Heart right ventricle (tissue), 16 donors: ENCODE measurements at regions of chr1 and their contacts with region 1.

Region 1: DNA sequence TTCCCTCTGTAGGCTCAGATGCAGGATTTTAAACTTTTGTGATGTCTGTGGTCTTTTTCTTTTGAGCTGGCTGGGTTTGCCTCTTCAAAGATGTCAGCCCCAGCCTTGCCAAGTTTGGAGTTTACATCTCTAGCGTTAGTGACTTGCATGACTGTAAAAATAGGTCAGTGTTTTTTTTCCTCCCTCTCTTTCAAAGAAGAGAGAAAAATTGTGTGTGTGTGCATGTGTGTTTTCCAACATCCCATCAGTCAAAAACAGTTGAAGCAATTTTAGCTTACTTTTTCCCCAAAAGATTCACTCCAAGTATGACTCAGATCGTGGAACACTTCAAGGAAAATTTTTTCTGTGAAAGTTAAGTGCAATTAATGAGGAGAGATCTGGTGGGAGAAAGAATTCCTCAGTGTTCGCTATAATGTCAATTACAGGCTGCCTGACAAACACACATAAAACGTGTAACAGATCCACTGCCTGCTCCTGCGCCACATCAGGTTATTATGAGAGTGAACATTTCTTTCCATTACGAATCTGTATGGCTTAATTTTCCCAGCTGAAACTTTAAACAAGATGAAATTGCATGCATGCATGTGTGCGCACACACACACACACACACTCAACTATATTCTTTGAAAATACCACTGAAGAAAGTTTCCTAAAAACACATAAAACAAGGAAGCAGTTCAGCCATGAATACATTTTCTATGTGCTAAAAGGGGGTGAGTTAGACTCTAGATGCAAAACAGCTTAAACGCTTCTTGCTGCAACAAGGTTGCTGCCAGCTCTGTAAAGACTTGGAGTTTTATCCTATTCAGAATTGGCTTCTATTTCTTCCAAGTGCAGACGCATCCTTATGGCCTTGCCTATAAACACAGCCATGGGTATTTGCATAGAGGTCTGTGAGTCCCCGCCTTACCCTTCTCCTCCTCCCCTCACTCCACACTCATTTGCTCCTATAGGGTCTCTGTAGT is 55.5 kb downstream of the TLR5 start:
- DNase-seq: peak in 1 of 2 donors; percentile 34
- ATAC-seq: peak in 5 of 8 donors; percentile 16 to 41 (median 25)
- H3K4me3 ChIP-seq: peak overlapping the region in 2 of 10 donors; percentile 5 to 13
- H3K27ac ChIP-seq: peak overlapping the region in 7 of 10 donors; percentile 27 to 62 (median 48)
- H3K4me1 ChIP-seq: peaks cover 0 to 20% (median 5%) of the 10 kb centered on the region in 9 donors
- H3K27me3 ChIP-seq: no peaks in the 10 kb centered on the region
- CTCF ChIP-seq: no peak

Region 2: DNA sequence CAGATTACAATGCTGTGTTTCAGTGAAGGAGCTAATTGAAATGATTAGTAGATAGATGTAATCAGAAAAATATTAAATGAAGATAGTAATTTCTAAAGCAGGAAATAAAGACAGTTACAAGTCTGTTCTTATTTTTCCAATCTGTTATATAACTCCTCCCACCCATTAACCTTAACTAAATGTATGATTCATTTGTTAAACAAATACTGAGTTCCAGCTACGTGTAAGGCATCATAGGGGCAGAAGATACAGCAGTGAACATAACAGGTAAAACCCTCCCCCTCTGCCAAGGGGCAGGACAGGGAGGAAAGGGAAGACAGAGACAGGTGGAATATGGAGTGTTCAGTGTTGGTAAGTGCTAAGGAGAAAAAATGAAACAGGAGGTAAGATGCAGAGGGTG is 350.6 kb before region 1 on chr1 and contains the start of gene FAM177B:
- intact Hi-C with region 1: loop called in 4 of 10 experiments (anchors 2 to 5 kb)
- DNase-seq: no peak
- ATAC-seq: no peak
- H3K4me3 ChIP-seq: no peak within 1 kb of the TSS
- H3K27ac ChIP-seq: no peak within 1 kb of the TSS
- H3K4me1 ChIP-seq: no peaks in the 10 kb centered on the region
- H3K27me3 ChIP-seq: no peaks in the 10 kb centered on the region
- CTCF ChIP-seq: no peak
- total RNA-seq, gene FAM177B: not detected

Region 3: GRCh38 chr1:222880586-222880985 is 207.0 kb before region 1 on chr1:
- intact Hi-C with region 1: no loop called
- DNase-seq: no peak
- ATAC-seq: no peak
- H3K4me3 ChIP-seq: no peak overlapping the region
- H3K27ac ChIP-seq: no peak overlapping the region
- H3K4me1 ChIP-seq: peaks cover 0 to 10% (median 0%) of the 10 kb centered on the region in 9 donors
- H3K27me3 ChIP-seq: no peaks in the 10 kb centered on the region
- CTCF ChIP-seq: no peak